ENCODE measurements at regions of chr6 and their contacts with region 1.

Region 1: GRCh38 chr6:89311853-89312531 is 3.1 kb downstream of the GABRR2 start:
- DNase-seq: peak; percentile 70
- ATAC-seq: peak; percentile 98
- H3K4me3 Mint-ChIP-seq: no peak overlapping the region
- H3K27ac Mint-ChIP-seq: peak overlapping the region; percentile 59; the same call in 1 of the 2 replicates
- H3K4me1 Mint-ChIP-seq: peaks cover 26% of the 10 kb centered on the region
- H3K27me3 Mint-ChIP-seq: no peaks in the 10 kb centered on the region
- CTCF ChIP-seq: 0 out of 2 replicates have a peak, but pooled peaks have one; percentile 8

Region 2: GRCh38 chr6:89281779-89282246 is 30.2 kb before region 1 on chr6:
- CTCF ChIA-PET with region 1: interaction called, 16 read pairs
- POLR2A ChIA-PET with region 1: no interaction called
- DNase-seq: peak; percentile 74
- ATAC-seq: peak; percentile 95
- H3K4me3 Mint-ChIP-seq: no peak overlapping the region
- H3K27ac Mint-ChIP-seq: no peak overlapping the region
- H3K4me1 Mint-ChIP-seq: peaks cover 17% of the 10 kb centered on the region
- H3K27me3 Mint-ChIP-seq: peaks cover 4% of the 10 kb centered on the region; the same call in 1 of the 2 replicates
- CTCF ChIP-seq: peak; percentile 54; the same call in 1 of the 2 replicates

Region 3: DNA sequence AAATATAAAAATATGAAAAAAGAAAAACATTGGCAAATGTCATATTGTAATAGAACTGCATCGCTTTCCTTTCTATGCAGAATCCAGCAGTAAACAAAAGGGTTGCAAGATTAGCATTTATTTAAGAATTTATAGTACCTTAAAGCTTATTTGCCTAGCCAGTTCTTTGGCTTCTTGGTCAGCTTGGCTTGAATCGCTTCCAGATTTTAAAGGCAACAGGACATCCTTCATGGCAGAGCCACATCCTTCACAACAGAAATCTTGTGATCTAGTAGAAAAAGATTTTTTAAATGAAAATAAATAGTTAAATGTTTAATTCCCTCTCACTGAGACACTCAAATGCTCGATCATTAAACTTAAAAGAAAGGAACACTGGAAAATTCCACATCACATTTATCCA is 23.2 kb after region 1 on chr6:
- CTCF ChIA-PET with region 1: interaction called, 10 read pairs
- POLR2A ChIA-PET with region 1: no interaction called
- DNase-seq: no peak
- ATAC-seq: no peak
- H3K4me3 Mint-ChIP-seq: no peak overlapping the region
- H3K27ac Mint-ChIP-seq: no peak overlapping the region
- H3K4me1 Mint-ChIP-seq: no peaks in the 10 kb centered on the region
- H3K27me3 Mint-ChIP-seq: no peaks in the 10 kb centered on the region
- CTCF ChIP-seq: no peak

Region 4: GRCh38 chr6:89360415-89360999 is 48.5 kb after region 1 on chr6:
- CTCF ChIA-PET with region 1: interaction called, 41 read pairs
- POLR2A ChIA-PET with region 1: no interaction called
- DNase-seq: no peak
- ATAC-seq: no peak
- H3K4me3 Mint-ChIP-seq: no peak overlapping the region
- H3K27ac Mint-ChIP-seq: no peak overlapping the region
- H3K4me1 Mint-ChIP-seq: peaks cover 5% of the 10 kb centered on the region; the same call in 1 of the 2 replicates
- H3K27me3 Mint-ChIP-seq: peaks cover 19% of the 10 kb centered on the region
- CTCF ChIP-seq: no peak

Region 5: DNA sequence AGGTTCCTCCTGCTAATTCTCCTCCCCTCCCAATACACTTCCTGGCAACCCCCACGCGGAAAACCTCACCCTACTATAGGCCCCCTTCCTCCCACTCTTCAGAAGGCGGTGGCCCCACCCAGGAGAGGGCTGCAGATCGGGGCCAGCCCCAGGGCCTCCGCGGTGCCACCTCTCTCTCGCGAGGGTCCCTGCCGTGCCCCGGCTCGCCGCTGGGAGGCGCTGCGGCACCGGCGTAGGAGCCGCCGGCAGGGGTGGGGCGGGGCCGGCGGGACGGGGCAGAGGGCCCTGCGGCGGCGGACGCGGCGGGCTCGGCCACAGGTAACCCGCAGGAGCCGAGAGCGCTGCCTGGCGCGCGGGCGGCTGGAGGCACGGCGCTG is 120.9 kb after region 1 on chr6 and contains the start of gene ANKRD6:
- CTCF ChIA-PET with region 1: interaction called, 11 read pairs
- POLR2A ChIA-PET with region 1: no interaction called
- DNase-seq: peak; percentile 84
- ATAC-seq: peak; percentile 87
- H3K4me3 Mint-ChIP-seq: peak within 1 kb of the TSS; percentile 83
- H3K27ac Mint-ChIP-seq: no peak within 1 kb of the TSS
- H3K4me1 Mint-ChIP-seq: peaks cover 33% of the 10 kb centered on the region
- H3K27me3 Mint-ChIP-seq: peaks cover 42% of the 10 kb centered on the region
- CTCF ChIP-seq: peak; percentile 97
- total RNA-seq, gene ANKRD6: 10.9 to 13.9 TPM (median 12.6 TPM) in 3 replicates

Measured in WTC11 (cell line).